ENCODE measurements at regions of chr19 and their contacts with region 1.

Region 1: DNA sequence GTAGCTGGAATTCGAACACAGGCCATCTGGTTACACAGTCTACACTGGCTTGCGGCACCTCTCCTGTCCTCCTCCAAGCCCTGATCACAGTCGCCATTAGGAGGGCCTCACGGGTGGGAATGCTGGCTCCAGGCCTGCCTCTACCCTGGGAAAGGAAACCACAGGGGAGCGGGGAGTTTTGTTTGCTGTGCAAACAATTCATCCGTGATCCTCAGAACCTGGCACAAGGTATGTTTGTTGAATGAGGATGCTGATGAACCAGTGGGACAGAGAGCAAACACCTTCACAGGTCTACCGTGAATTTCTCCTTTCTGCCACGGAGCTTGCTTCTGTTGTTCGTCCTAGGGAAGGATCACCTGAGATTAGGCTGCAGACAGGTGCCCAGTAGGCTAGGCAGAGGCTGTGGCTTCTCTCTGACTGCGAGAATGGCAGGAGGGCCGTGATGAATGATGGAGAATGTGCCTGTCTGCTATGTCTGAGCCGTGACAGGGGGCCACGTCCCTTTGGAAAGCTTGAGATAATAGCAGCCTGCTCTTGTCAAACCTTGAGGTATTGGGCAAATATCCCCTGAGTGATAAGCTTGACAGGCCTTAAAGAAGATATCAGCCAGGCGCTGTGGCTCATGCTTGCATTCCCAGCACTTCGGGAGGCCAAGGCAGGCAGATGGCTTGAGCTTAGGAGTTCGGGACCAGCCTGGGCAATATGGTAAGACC is 36.7 kb downstream of the PIN1 start:
- DNase-seq: no peak
- ATAC-seq: no peak
- H3K4me3 ChIP-seq: no peak overlapping the region
- H3K27ac ChIP-seq: no peak overlapping the region
- H3K4me1 ChIP-seq: no peaks in the 10 kb centered on the region
- H3K27me3 ChIP-seq: no peaks in the 10 kb centered on the region; the same call in 1 of the 2 replicates
- CTCF ChIP-seq: no peak
- POLR2A ChIP-seq: no peak
- RAD21 ChIP-seq: no peak

Region 2: DNA sequence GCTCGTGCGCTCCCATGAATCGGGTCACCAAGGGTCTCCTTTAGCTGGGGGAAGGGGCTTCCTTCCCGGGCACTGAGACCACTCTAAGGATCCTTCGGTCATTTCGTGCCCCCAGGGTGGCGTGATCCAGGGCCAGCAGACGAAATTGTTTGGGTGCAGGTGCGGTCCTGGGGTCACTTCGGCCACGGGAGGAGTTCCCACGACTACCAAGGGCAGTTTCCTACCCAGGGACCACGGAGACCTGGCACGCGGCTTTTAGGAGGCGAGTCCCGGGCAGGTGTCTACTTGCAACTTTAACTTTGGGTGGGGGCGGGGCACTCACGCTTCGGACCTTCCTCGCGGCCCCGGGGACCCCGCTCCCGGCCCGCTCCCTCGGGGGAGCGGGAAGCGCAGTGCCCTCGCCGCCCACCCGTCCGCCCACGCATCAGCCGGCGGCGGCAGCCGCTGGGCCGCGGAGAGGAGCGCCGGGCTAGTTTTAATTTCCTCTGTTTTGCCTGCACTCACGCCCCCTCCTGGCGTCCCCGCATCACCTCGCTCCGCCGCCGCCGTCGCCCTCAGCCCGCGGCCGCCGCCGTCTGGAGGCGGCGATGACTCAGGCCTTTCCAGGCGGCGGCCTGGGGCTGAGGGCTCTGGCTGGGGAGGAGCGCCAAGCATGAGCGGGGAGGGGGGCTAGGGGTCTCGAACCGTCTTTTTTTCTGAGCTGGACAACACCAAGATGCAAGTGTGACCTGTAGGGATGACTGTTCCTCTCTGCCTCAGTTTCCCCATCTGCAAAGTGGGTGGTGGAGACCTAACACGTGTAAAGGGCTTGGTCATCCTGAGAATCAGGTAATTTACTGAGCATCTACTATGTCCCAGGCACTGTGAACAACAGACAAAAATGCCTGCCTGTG is 42.8 kb after region 1 on chr19:
- CTCF ChIA-PET with region 1: no interaction called
- POLR2A ChIA-PET with region 1: no interaction called
- dilution Hi-C with region 1: no loop called
- in situ Hi-C with region 1: loop called (anchors 5 kb)
- intact Hi-C with region 1: no loop called
- DNase-seq: peak; percentile 77
- ATAC-seq: peak; percentile 84
- H3K4me3 ChIP-seq: peak overlapping the region; percentile 52
- H3K27ac ChIP-seq: no peak overlapping the region
- H3K4me1 ChIP-seq: peaks cover 2% of the 10 kb centered on the region; the same call in 1 of the 2 replicates
- H3K27me3 ChIP-seq: peaks cover 16% of the 10 kb centered on the region
- CTCF ChIP-seq: peak; percentile 66
- POLR2A ChIP-seq: no peak
- RAD21 ChIP-seq: peak; percentile 53